CD14-positive monocyte (primary cell): ENCODE measurements at regions of chr2 and their contacts with region 1.

Region 1: DNA sequence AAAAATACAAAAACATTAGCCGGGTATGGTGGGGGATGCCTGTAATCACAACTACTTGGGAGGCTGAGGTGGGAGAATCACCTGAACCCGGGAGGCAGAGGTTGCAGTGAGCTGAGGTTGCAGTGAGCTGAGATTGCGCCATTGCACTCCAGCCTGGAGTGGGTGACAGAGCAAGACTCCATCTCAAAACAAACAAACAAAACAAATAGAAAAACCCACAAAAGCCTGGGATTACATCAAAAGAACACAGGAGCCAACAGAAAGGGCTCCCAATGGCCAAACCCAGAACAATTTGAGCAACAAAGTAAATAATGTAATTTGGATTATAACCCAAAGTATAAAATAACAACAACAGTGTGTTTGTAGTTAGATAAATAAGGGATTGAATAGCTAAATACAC is 159.8 kb downstream of the UXS1 start:
- DNase-seq: no peak
- H3K4me3 ChIP-seq: no peak overlapping the region
- H3K4me3 Mint-ChIP-seq: no peak overlapping the region
- H3K27ac ChIP-seq: no peak overlapping the region
- H3K27ac Mint-ChIP-seq: no peak overlapping the region
- H3K4me1 ChIP-seq: no peaks in the 10 kb centered on the region
- H3K4me1 Mint-ChIP-seq: peaks cover 7% of the 10 kb centered on the region
- H3K27me3 ChIP-seq: no peaks in the 10 kb centered on the region
- H3K27me3 Mint-ChIP-seq: peaks cover 0 to 2% (median 0%) of the 10 kb centered on the region in 3 donors
- CTCF ChIP-seq: no peak

Region 2: GRCh38 chr2:105999211-105999989 is 34.9 kb before region 1 on chr2:
- intact Hi-C with region 1: loop called in 1 of 2 experiments (anchors 2 kb)
- DNase-seq: no peak
- H3K4me3 ChIP-seq: no peak overlapping the region
- H3K4me3 Mint-ChIP-seq: no peak overlapping the region
- H3K27ac ChIP-seq: no peak overlapping the region
- H3K27ac Mint-ChIP-seq: no peak overlapping the region
- H3K4me1 ChIP-seq: no peaks in the 10 kb centered on the region
- H3K4me1 Mint-ChIP-seq: no peaks in the 10 kb centered on the region
- H3K27me3 ChIP-seq: no peaks in the 10 kb centered on the region
- H3K27me3 Mint-ChIP-seq: peaks cover 0 to 2% (median 0%) of the 10 kb centered on the region in 3 donors
- CTCF ChIP-seq: no peak